Cardiac septum (tissue), 1 donor: ENCODE measurements at regions of chr20 and their contacts with region 1.

Region 1: GRCh38 chr20:13771853-13772453 is 12.8 kb downstream of the ESF1 start:
- DNase-seq: no peak

Region 2: DNA sequence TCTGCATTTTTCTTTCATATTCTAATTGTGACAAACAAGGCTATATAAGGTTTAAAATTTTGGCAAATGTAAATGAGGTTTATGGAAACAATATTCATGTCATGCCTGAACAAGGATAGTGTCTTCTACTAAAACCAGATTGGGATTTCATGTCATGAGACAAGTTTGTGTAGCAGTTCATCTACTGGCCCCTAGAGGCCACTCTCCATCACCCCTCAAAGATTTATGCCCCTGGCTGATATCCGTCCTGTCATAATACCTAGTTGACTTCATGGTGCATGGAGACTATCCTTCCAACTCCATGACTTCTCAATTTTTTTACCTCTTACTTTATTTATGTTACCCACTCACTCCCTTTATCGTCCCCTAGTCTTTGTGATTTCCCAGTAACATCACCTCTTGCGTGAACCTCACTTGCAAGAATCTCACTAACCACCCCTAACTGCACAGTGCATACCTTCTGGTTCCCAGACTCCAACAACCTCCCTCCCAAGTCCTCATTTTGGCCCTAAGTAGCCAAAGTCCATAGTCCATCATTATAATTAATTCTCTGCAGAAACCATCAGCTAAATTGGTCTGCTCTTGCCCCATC is 313.0 kb before region 1 on chr20:
- intact Hi-C with region 1: loop called (anchors 10 kb)
- DNase-seq: no peak